Caco-2 (cell line): ENCODE measurements at regions of chr11 and their contacts with region 1.

Region 1: GRCh38 chr11:84800755-84801346 is 826.3 kb downstream of the DLG2 start:
- DNase-seq: peak; percentile 54 to 65
- H3K4me3 ChIP-seq: no peak overlapping the region
- H3K4me3 Mint-ChIP-seq: no peak overlapping the region
- H3K27ac Mint-ChIP-seq: no peak overlapping the region
- H3K4me1 ChIP-seq: no peaks in the 10 kb centered on the region
- H3K4me1 Mint-ChIP-seq: no peaks in the 10 kb centered on the region
- H3K27me3 ChIP-seq: no peaks in the 10 kb centered on the region; the same call in 1 of the 2 replicates
- H3K27me3 Mint-ChIP-seq: peaks cover 3% of the 10 kb centered on the region
- CTCF ChIP-seq: peak; percentile 63 to 77

Region 2: DNA sequence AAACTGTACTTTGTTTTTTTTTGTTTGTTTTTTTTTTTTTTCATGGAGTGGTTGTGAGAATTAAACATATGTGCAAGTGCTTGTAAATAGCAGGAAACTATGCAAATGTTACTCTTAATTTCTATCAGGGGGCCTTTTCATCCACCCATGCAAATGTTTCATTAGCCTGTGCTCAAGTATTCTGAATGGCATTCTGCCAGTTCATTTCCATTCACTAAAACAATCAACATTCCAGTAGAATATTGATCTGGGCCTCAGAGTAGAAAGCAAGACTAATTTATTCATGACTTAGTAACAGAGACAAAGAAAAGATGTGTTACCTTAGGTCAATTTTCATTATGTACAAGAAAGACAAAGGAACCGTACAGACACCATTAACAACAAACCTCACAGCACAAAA is 145.1 kb before region 1 on chr11:
- CTCF ChIA-PET with region 1: no interaction called
- POLR2A ChIA-PET with region 1: no interaction called
- intact Hi-C with region 1: no loop called
- DNase-seq: no peak
- H3K4me3 ChIP-seq: no peak overlapping the region
- H3K4me3 Mint-ChIP-seq: no peak overlapping the region
- H3K27ac Mint-ChIP-seq: no peak overlapping the region
- H3K4me1 ChIP-seq: no peaks in the 10 kb centered on the region
- H3K4me1 Mint-ChIP-seq: no peaks in the 10 kb centered on the region
- H3K27me3 ChIP-seq: no peaks in the 10 kb centered on the region
- H3K27me3 Mint-ChIP-seq: peaks cover 7% of the 10 kb centered on the region
- CTCF ChIP-seq: no peak

Region 3: GRCh38 chr11:84740050-84740449 is 60.8 kb before region 1 on chr11:
- CTCF ChIA-PET with region 1: no interaction called
- POLR2A ChIA-PET with region 1: no interaction called
- intact Hi-C with region 1: no loop called
- DNase-seq: no peak
- H3K4me3 ChIP-seq: no peak overlapping the region
- H3K4me3 Mint-ChIP-seq: no peak overlapping the region
- H3K27ac Mint-ChIP-seq: no peak overlapping the region
- H3K4me1 ChIP-seq: no peaks in the 10 kb centered on the region
- H3K4me1 Mint-ChIP-seq: no peaks in the 10 kb centered on the region
- H3K27me3 ChIP-seq: no peaks in the 10 kb centered on the region
- H3K27me3 Mint-ChIP-seq: peaks cover 14% of the 10 kb centered on the region
- CTCF ChIP-seq: no peak

Region 4: GRCh38 chr11:84886344-84886743 is 85.5 kb after region 1 on chr11:
- CTCF ChIA-PET with region 1: no interaction called
- POLR2A ChIA-PET with region 1: no interaction called
- intact Hi-C with region 1: loop called (anchors 2 kb)
- DNase-seq: no peak
- H3K4me3 ChIP-seq: no peak overlapping the region
- H3K4me3 Mint-ChIP-seq: no peak overlapping the region
- H3K27ac Mint-ChIP-seq: no peak overlapping the region
- H3K4me1 ChIP-seq: peaks cover 15% of the 10 kb centered on the region; the same call in 1 of the 2 replicates
- H3K4me1 Mint-ChIP-seq: peaks cover 8% of the 10 kb centered on the region
- H3K27me3 ChIP-seq: no peaks in the 10 kb centered on the region
- H3K27me3 Mint-ChIP-seq: no peaks in the 10 kb centered on the region
- CTCF ChIP-seq: no peak

Region 5: DNA sequence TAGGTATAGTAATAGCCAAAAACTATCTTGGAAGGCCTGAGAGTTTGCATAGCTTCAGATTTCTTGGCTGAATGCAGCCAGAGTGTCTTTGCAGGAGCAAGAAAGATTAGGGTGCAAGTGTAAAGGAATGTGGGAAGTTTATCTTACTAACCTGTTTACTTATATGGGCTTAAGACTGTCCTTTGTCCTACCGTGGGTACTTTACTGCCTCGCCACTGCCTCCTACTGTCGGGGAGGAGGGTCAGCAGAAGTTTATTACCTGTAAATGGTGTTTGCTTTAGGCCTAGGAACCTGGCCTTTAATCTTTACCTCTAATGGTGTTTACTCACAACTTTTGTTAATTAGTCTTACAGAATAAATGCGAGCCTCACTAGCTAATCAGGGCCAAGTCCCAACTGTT is 192.5 kb after region 1 on chr11:
- CTCF ChIA-PET with region 1: no interaction called
- POLR2A ChIA-PET with region 1: no interaction called
- intact Hi-C with region 1: loop called (anchors 1 kb)
- DNase-seq: peak; percentile 40 to 42
- H3K4me3 ChIP-seq: no peak overlapping the region
- H3K4me3 Mint-ChIP-seq: no peak overlapping the region
- H3K27ac Mint-ChIP-seq: no peak overlapping the region
- H3K4me1 ChIP-seq: no peaks in the 10 kb centered on the region
- H3K4me1 Mint-ChIP-seq: no peaks in the 10 kb centered on the region
- H3K27me3 ChIP-seq: no peaks in the 10 kb centered on the region
- H3K27me3 Mint-ChIP-seq: no peaks in the 10 kb centered on the region
- CTCF ChIP-seq: peak; percentile 54 to 59

Region 6: DNA sequence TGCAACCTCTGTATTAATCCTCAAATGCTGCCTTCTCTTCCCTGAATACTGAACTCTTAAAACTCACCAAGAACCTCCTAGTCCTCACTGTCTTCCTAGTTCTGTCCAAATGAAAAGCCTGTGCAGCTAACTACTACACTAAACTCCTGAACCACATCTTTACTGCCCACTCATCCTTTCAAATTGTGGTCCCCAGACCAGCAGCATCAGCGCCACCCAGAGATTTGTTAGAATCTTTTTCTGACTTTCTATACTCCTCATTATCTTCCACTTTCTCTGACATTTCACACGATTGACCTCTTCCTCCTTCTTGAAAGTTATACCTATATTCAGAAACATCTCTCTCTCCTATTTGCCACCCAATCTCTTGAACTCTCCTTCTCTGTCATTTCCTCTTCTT is 365.0 kb after region 1 on chr11:
- CTCF ChIA-PET with region 1: no interaction called
- POLR2A ChIA-PET with region 1: no interaction called
- intact Hi-C with region 1: loop called (anchors 5 kb)
- DNase-seq: no peak
- H3K4me3 ChIP-seq: no peak overlapping the region
- H3K4me3 Mint-ChIP-seq: no peak overlapping the region
- H3K27ac Mint-ChIP-seq: no peak overlapping the region
- H3K4me1 ChIP-seq: peaks cover 28% of the 10 kb centered on the region
- H3K4me1 Mint-ChIP-seq: peaks cover 17% of the 10 kb centered on the region
- H3K27me3 ChIP-seq: no peaks in the 10 kb centered on the region
- H3K27me3 Mint-ChIP-seq: no peaks in the 10 kb centered on the region
- CTCF ChIP-seq: no peak

Region 7: DNA sequence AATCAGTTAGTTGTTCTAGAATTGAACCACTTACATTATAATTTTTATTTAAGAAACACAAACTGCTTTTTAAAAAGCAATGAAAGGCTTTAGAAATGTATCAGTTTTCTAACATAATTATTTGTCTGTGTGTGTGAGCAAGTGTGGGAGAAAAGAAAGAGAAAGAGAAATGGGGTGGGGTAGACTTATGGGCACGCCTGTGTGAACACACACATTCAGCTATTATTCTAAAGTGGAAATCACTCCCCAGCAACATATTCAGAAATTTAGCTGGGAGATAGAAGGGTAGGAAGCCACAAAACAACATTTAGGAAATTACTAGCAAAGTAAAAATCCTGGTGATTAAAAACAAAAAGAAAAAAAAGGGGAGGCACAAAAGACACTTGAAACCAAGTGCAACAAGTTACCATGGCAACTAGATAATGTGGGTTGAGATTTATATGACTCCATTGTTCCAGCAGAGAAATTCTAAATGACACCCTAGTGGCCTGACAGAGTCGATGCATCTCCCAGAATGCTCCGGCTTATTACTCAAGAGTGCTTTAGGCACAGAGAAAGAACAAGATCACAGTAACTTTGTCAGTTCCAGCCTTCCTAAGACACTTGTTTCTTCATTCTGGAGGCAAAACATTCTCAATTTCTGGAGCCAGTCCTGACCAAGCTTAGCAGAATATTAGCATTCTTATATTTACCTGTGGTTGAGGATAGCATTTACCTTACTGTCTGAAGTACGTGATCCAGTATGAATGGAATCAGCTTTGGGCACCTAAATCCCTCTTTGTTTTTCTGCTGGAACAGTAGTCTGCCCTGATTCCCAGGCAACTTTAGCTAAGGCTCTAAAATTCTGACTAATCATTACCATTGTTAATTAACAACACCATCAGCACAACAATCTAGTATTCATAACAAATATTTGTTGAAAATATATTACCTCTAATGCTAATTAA is 381.9 kb after region 1 on chr11:
- CTCF ChIA-PET with region 1: no interaction called
- POLR2A ChIA-PET with region 1: no interaction called
- intact Hi-C with region 1: loop called (anchors 1 kb)
- DNase-seq: peak; percentile 61 to 70
- H3K4me3 ChIP-seq: no peak overlapping the region
- H3K4me3 Mint-ChIP-seq: no peak overlapping the region
- H3K27ac Mint-ChIP-seq: no peak overlapping the region
- H3K4me1 ChIP-seq: peaks cover 9% of the 10 kb centered on the region
- H3K4me1 Mint-ChIP-seq: peaks cover 16% of the 10 kb centered on the region
- H3K27me3 ChIP-seq: no peaks in the 10 kb centered on the region
- H3K27me3 Mint-ChIP-seq: no peaks in the 10 kb centered on the region
- CTCF ChIP-seq: peak; percentile 72 to 80

Region 8: GRCh38 chr11:85263351-85263750 is 462.5 kb after region 1 on chr11:
- CTCF ChIA-PET with region 1: no interaction called
- POLR2A ChIA-PET with region 1: no interaction called
- intact Hi-C with region 1: loop called (anchors 5 kb)
- DNase-seq: no peak
- H3K4me3 ChIP-seq: no peak overlapping the region
- H3K4me3 Mint-ChIP-seq: no peak overlapping the region
- H3K27ac Mint-ChIP-seq: no peak overlapping the region
- H3K4me1 ChIP-seq: no peaks in the 10 kb centered on the region
- H3K4me1 Mint-ChIP-seq: no peaks in the 10 kb centered on the region
- H3K27me3 ChIP-seq: no peaks in the 10 kb centered on the region
- H3K27me3 Mint-ChIP-seq: no peaks in the 10 kb centered on the region
- CTCF ChIP-seq: no peak